ENCODE measurements at regions of chr22 and their contacts with region 1.

Region 1: GRCh38 chr22:44956840-44957767 is 52.7 kb downstream of the PHF21B start:
- DNase-seq: no peak
- ATAC-seq: peak in 1 of 4 donors; percentile 37
- H3K4me3 ChIP-seq: no peak overlapping the region
- H3K27ac ChIP-seq: no peak overlapping the region
- H3K4me1 ChIP-seq: no peaks in the 10 kb centered on the region
- H3K27me3 ChIP-seq: peaks cover 0 to 15% (median 0%) of the 10 kb centered on the region in 9 donors
- CTCF ChIP-seq: peak in 2 of 12 donors; percentile 9 to 12
- POLR2A ChIP-seq: no peak

Region 2: DNA sequence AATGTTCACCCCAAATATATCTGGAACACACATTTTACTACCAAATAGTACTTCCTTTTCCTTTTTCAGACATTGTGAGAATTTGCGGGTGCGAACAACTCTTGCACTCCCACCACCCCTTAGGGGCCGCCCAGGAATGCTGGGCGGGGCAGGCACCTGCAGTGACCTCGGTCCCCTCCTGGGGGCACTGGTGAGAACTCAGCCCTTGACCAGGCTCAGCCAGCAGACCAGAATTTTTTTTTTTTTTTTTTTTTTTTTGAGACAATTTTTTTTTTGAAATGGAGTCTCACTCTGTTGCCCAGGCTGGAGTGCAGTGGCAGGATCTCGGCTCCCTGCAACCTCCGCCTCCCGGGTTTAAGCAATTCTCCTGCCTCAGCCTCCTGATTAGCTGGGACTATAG is 128.9 kb before region 1 on chr22:
- intact Hi-C with region 1: loop called in 1 of 10 experiments (anchors 10 kb)
- DNase-seq: no peak
- ATAC-seq: no peak
- H3K4me3 ChIP-seq: no peak overlapping the region
- H3K27ac ChIP-seq: no peak overlapping the region
- H3K4me1 ChIP-seq: no peaks in the 10 kb centered on the region
- H3K27me3 ChIP-seq: no peaks in the 10 kb centered on the region
- CTCF ChIP-seq: peak in 6 of 12 donors; percentile 6 to 31 (median 24)
- POLR2A ChIP-seq: no peak

Region 3: GRCh38 chr22:44918166-44918924 is 38.8 kb before region 1 on chr22:
- intact Hi-C with region 1: loop called in 1 of 10 experiments (anchors 2 kb)
- DNase-seq: peak in 1 of 5 donors; percentile 53
- ATAC-seq: peak in 1 of 4 donors; percentile 14
- H3K4me3 ChIP-seq: no peak overlapping the region
- H3K27ac ChIP-seq: no peak overlapping the region
- H3K4me1 ChIP-seq: no peaks in the 10 kb centered on the region
- H3K27me3 ChIP-seq: no peaks in the 10 kb centered on the region
- CTCF ChIP-seq: no peak
- POLR2A ChIP-seq: no peak

Measured in heart left ventricle (tissue), 16 donors.